HEK293 (cell line): ENCODE measurements at regions of chr19 and their contacts with region 1.

Region 1: DNA sequence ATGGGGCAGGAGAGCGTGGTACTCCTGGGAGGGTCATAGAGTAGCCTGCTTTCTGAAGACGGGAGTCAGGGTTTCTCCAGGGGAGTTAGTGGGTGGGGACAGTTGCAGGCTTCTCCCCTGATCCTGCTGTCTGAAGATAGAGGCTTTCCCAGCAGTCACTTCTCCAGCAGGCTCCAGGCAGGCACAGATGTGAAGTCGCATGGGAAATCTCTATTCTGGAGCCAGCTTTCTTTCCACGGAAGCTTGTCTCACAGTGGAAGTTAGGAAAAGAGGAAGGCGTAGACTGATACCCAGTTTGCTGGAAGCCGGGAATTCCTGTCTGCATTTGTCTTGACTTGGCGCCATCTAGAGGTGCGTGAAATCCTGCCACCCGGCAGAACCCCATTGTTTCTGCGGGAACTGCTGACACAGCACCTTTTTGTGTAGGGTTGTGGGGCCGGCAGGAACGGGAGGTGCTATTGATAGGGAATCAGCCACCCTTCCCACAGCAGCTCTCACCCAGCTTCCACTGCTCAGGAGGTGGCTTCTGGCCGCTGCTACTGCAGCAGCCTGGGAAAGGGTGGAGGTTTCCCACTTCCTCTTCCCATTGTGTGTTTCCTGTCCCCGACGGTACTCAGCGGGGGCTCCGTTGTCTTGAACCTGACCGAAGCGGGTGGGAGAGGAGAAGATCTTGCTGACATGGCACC is 28.5 kb upstream of the NPAS1 start:
- H3K4me3 ChIP-seq: no peak overlapping the region
- H3K27ac ChIP-seq: no peak overlapping the region
- H3K4me1 ChIP-seq: no peaks in the 10 kb centered on the region
- CTCF ChIP-seq: peak; percentile 84

Region 2: GRCh38 chr19:46753420-46754155 is 237.5 kb before region 1 on chr19:
- CTCF ChIA-PET with region 1: interaction called, 17 read pairs
- POLR2A ChIA-PET with region 1: no interaction called
- H3K4me3 ChIP-seq: no peak overlapping the region
- H3K27ac ChIP-seq: no peak overlapping the region
- H3K4me1 ChIP-seq: no peaks in the 10 kb centered on the region
- CTCF ChIP-seq: peak; percentile 57

Region 3: DNA sequence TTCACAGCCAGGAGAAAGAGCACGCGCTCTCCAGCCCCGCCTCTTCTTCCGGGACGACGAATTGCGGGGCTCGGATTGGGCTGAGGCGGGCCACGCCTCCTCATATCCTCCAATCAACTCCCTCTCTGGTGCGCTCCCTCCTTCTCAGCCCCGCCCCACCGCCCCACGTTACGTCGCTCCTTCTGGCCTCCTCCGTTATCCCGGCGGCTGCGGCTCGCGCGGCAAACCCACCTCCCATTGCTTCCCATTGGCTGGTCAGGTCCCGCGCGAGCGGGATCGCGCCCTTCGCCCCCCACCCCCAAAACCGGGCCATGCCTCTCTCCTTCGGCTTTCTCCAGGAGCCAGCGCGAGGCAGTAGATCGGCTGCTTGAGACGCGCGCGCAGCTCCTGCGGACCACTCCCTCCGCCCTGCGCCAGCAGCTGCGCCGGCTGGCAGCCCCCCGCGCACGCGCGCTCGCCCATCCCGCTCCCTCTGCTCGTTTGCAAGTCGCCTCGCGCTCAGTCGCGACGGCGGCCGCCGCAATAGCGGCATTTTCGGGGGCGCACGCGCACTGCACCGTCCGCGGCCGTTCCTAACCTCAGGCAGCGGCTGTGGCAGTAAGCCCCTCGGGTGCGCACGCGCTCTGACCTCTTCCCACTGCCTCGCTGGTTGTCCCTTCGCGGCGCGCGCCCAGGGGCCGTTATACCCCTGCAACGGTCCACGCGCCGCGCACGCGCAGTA is 130.8 kb before region 1 on chr19:
- CTCF ChIA-PET with region 1: interaction called, 65 read pairs
- POLR2A ChIA-PET with region 1: interaction called, 3 read pairs
- H3K4me3 ChIP-seq: peak overlapping the region; percentile 76
- H3K27ac ChIP-seq: peak overlapping the region; percentile 99
- H3K4me1 ChIP-seq: peaks cover 32% of the 10 kb centered on the region
- CTCF ChIP-seq: peak; percentile 67; the same call in 1 of the 2 replicates

Region 4: DNA sequence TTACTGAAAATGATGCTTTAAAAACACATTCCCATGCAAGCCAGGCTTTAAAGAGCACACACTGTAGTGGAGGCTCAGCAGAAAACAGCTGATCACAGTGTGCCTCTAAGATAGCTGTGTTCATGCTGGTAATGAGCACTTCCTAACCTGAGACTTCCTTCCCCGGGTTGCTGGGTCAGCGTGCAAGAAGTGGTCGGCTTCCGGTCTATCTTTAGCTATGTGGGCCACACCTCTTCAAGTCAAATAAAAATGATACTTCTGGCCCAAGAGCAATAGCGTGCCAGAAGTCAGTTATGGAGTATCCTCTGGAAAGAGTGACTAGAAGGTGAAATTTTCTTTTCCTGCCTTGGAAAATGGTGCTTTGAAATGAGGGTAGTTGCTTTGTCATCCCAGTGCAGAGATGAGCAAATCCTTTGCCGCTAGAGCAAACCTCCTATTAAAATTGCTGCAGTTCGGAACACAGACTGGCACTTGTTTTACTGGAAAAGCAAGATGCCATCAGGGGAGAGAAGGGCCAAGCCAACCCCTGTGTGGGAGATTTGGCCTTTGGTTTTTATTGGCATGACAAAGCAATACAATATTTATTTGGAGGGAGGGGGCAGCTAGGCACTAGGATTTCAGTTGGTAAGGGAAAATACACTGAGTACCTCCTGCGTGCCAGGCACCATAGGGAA is 66.1 kb before region 1 on chr19:
- CTCF ChIA-PET with region 1: interaction called, 35 read pairs
- POLR2A ChIA-PET with region 1: no interaction called
- H3K4me3 ChIP-seq: no peak overlapping the region
- H3K27ac ChIP-seq: peak overlapping the region; percentile 25; the same call in 1 of the 2 replicates
- H3K4me1 ChIP-seq: peaks cover 30% of the 10 kb centered on the region
- CTCF ChIP-seq: no peak

Region 5: GRCh38 chr19:46975925-46976782 is 15.0 kb before region 1 on chr19:
- CTCF ChIA-PET with region 1: interaction called, 33 read pairs
- POLR2A ChIA-PET with region 1: no interaction called
- H3K4me3 ChIP-seq: no peak overlapping the region
- H3K27ac ChIP-seq: peak overlapping the region; percentile 42
- H3K4me1 ChIP-seq: peaks cover 18% of the 10 kb centered on the region
- CTCF ChIP-seq: no peak

Region 6: DNA sequence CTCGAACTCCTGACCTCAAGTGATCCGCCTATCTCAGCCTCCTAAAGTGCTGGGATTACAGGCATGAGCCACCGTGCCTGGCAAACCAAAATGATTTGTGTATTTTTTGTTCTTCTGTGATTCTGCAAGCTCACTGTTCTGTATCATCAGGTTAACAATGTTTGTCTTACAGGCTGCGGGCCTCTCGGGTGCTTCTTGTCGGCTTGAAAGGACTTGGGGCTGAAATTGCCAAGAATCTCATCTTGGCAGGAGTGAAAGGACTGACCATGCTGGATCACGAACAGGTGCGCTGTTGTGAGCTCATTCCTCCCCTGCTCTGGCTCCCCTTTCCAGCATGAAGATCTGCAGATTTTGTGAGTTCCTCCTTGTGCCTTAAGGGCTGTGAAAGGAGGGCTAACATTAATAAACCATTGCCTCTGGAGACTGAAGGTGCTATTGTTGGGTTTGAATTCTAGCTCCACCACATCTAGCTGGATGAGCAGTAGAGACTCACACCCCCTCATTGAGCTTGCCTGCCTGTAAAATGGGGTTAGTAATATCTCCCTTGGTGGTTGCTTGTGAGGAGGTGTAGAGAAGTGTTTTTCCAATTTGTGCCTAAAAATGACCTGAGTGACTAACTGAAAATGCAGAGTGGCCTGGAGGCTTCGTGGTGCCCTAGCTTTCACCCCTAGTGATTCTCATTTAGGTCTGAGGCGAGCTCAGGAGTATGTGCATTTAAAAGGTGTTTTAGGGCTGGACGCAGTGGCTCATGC is 152.4 kb after region 1 on chr19:
- CTCF ChIA-PET with region 1: no interaction called
- POLR2A ChIA-PET with region 1: no interaction called
- H3K4me3 ChIP-seq: no peak overlapping the region
- H3K27ac ChIP-seq: peak overlapping the region; percentile 28; the same call in 1 of the 2 replicates
- H3K4me1 ChIP-seq: peaks cover 6% of the 10 kb centered on the region; the same call in 1 of the 2 replicates
- CTCF ChIP-seq: no peak

Region 7: GRCh38 chr19:47267350-47267759 is 276.2 kb after region 1 on chr19:
- CTCF ChIA-PET with region 1: no interaction called
- POLR2A ChIA-PET with region 1: no interaction called
- H3K4me3 ChIP-seq: no peak overlapping the region
- H3K27ac ChIP-seq: no peak overlapping the region
- H3K4me1 ChIP-seq: no peaks in the 10 kb centered on the region
- CTCF ChIP-seq: no peak